Activated CD4-positive, alpha-beta T cell treated with anti-CD3 and anti-CD28 coated beads for 36 hours (primary cell): ENCODE measurements at regions of chr15 and their contacts with region 1.

Region 1: GRCh38 chr15:84852212-84852611 is 32.2 kb upstream of the SLC28A1 start:
- DNase-seq: no peak
- ATAC-seq: no peak
- H3K4me3 Mint-ChIP-seq: no peak overlapping the region
- H3K27ac Mint-ChIP-seq: no peak overlapping the region
- H3K4me1 Mint-ChIP-seq: no peaks in the 10 kb centered on the region
- H3K27me3 Mint-ChIP-seq: no peaks in the 10 kb centered on the region

Region 2: DNA sequence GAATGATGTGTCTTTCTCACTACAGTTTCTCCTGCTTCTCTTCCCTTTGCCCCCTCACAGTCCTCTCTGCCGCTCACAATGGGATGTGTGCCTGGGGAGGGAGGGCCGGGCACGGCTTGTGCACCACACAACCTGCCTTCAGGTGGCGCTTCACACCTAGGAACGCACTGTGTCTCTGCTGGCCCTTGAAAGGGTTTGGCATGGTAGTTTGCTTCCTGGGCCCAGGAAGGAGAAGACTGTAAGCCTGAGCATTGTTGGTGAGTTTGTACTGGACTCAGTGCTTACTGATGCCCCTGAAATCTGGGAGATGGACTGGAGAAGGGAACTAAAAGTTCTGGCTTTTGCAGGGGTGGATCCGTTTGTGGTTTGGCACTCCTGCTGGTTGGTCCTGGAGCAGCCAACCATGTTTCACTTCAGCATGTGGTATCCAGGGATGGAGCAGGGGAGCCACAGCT is 25.8 kb before region 1 on chr15:
- CTCF ChIA-PET with region 1: no interaction called
- POLR2A ChIA-PET with region 1: no interaction called
- intact Hi-C with region 1: no loop called
- DNase-seq: peak; percentile 59
- ATAC-seq: peak; percentile 44
- H3K4me3 Mint-ChIP-seq: no peak overlapping the region
- H3K27ac Mint-ChIP-seq: no peak overlapping the region
- H3K4me1 Mint-ChIP-seq: no peaks in the 10 kb centered on the region
- H3K27me3 Mint-ChIP-seq: no peaks in the 10 kb centered on the region

Region 3: GRCh38 chr15:84911879-84912660 is 59.9 kb after region 1 on chr15:
- CTCF ChIA-PET with region 1: no interaction called
- POLR2A ChIA-PET with region 1: no interaction called
- intact Hi-C with region 1: loop called in 1 of 2 experiments (anchors 5 kb)
- DNase-seq: no peak
- ATAC-seq: no peak
- H3K4me3 Mint-ChIP-seq: no peak overlapping the region
- H3K27ac Mint-ChIP-seq: no peak overlapping the region
- H3K4me1 Mint-ChIP-seq: peaks cover 11% of the 10 kb centered on the region
- H3K27me3 Mint-ChIP-seq: peaks cover 2% of the 10 kb centered on the region

Region 4: GRCh38 chr15:85154061-85154460 is 301.8 kb after region 1 on chr15:
- CTCF ChIA-PET with region 1: no interaction called
- POLR2A ChIA-PET with region 1: no interaction called
- intact Hi-C with region 1: no loop called
- DNase-seq: peak; percentile 12
- ATAC-seq: peak; percentile 47
- H3K4me3 Mint-ChIP-seq: no peak overlapping the region
- H3K27ac Mint-ChIP-seq: no peak overlapping the region
- H3K4me1 Mint-ChIP-seq: peaks cover 18% of the 10 kb centered on the region
- H3K27me3 Mint-ChIP-seq: no peaks in the 10 kb centered on the region

Region 5: GRCh38 chr15:85750319-85750806 is 898.2 kb after region 1 on chr15:
- CTCF ChIA-PET with region 1: no interaction called
- POLR2A ChIA-PET with region 1: no interaction called
- intact Hi-C with region 1: no loop called
- DNase-seq: peak; percentile 2
- ATAC-seq: no peak
- H3K4me3 Mint-ChIP-seq: no peak overlapping the region
- H3K27ac Mint-ChIP-seq: no peak overlapping the region
- H3K4me1 Mint-ChIP-seq: peaks cover 30% of the 10 kb centered on the region
- H3K27me3 Mint-ChIP-seq: no peaks in the 10 kb centered on the region